ENCODE measurements at regions of chr22 and their contacts with region 1.

Region 1: DNA sequence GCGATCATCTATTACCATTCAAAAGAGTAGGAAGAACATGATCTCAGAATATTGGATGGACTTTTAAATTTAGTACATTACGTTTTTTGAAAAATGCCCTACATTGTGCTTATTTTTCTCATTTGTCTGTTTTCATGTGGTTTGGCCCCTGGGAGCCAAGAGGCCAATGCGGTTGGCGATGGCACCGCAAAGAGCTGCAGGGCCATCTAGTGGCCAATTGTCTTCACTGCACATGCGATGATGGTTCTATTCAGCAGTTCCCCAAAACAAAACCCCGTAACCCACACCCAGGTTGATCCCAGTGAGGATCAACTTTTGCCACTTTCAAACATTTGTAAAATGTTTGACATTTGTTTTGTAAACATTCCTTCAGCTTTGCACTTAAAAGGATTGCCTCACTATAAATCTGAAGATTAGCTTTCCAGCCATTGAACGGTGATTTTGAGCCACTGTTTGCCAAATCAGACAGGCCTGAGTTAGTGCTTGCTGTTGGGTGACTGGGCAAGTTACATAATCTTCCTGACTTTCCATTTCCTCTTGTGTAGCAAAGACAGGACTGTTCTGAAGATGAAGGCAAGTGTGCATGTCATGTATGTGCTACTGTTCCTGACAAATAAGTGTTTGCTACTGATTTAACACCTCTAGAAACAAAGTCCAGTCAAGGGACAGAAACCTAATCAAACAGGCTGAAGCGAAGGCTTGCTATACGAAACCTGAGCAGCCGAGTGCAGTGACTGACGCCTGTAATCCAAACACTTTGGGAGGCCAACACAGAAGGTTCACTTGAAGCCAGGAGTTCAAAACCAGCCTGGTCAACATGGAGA is 29.2 kb upstream of the XBP1 start:
- DNase-seq: peak; percentile 65
- H3K4me3 Mint-ChIP-seq: no peak overlapping the region
- H3K27ac Mint-ChIP-seq: no peak overlapping the region
- H3K4me1 Mint-ChIP-seq: peaks cover 32% of the 10 kb centered on the region
- H3K27me3 Mint-ChIP-seq: no peaks in the 10 kb centered on the region

Region 2: DNA sequence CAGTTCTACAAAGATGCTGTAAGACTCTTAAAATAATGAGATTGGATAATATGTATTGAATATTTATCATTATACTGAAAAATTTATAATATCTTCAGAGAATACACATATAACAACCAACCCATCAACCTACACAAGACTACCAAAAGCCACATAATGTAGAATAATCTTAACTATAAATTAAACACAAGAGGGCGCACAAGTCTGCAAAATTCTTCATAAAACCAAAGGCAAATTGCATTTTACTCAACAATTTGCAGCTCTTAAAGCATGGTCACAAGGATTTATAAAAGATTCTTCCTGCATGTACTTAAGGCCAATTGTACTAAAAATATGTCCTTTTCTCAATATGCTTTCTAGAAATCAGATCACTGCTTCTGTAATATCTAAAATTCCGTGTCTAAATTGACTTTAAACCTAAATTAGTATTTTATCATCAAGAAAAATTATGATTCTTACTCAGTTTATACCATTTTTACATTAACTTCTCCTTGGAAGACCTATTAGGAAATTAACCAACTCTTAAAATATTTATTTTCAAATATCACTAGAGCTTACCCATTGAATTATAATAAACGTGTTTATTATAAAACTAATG is 228.9 kb before region 1 on chr22:
- intact Hi-C with region 1: loop called (anchors 1 kb)
- DNase-seq: no peak
- H3K4me3 Mint-ChIP-seq: no peak overlapping the region
- H3K27ac Mint-ChIP-seq: no peak overlapping the region
- H3K4me1 Mint-ChIP-seq: no peaks in the 10 kb centered on the region
- H3K27me3 Mint-ChIP-seq: peaks cover 32% of the 10 kb centered on the region

Region 3: GRCh38 chr22:28647216-28647615 is 182.4 kb before region 1 on chr22:
- intact Hi-C with region 1: no loop called
- DNase-seq: no peak
- H3K4me3 Mint-ChIP-seq: no peak overlapping the region
- H3K27ac Mint-ChIP-seq: no peak overlapping the region
- H3K4me1 Mint-ChIP-seq: no peaks in the 10 kb centered on the region
- H3K27me3 Mint-ChIP-seq: peaks cover 53% of the 10 kb centered on the region

Region 4: DNA sequence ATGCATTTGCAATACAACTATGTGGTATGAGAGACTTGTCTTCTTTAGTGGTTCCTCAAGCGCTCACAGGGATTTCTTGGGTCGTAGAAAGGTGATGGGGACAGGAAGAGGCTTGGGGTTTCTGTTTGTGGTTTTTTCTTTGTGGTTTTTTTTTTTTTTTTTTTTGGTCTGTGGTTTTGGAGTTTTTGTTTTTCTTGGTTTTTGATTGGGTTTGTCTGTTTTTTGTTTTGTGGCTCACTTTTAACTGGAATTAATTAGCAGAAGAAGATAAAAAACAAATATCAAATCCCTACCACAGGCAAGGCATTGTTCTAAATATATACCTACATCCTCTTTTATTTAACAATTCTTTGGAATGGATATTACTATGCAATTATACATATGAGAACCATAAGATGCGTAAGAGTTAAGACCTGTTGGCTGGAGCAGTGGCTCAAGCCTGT is 155.4 kb before region 1 on chr22:
- intact Hi-C with region 1: loop called (anchors 10 kb)
- DNase-seq: peak; percentile 41
- H3K4me3 Mint-ChIP-seq: no peak overlapping the region
- H3K27ac Mint-ChIP-seq: peak overlapping the region; percentile 93
- H3K4me1 Mint-ChIP-seq: peaks cover 26% of the 10 kb centered on the region
- H3K27me3 Mint-ChIP-seq: peaks cover 62% of the 10 kb centered on the region

Region 5: GRCh38 chr22:28741758-28742561 is 87.6 kb before region 1 on chr22 and contains the starts of genes CHEK2 and HSCB:
- intact Hi-C with region 1: loop called (anchors 1 kb)
- DNase-seq: peak; percentile 97
- H3K4me3 Mint-ChIP-seq: peak within 1 kb of the TSS; percentile 87
- H3K27ac Mint-ChIP-seq: peak within 1 kb of the TSS; percentile 83
- H3K4me1 Mint-ChIP-seq: peaks cover 36% of the 10 kb centered on the region
- H3K27me3 Mint-ChIP-seq: no peaks in the 10 kb centered on the region
- total RNA-seq, gene CHEK2: 33.7 and 33.8 TPM in 2 replicates
- total RNA-seq, gene HSCB: 14.1 and 14.6 TPM in 2 replicates

Region 6: GRCh38 chr22:28772633-28773460 is 56.7 kb before region 1 on chr22 and contains the start of gene CCDC117:
- intact Hi-C with region 1: loop called (anchors 2 kb)
- DNase-seq: peak; percentile 89
- H3K4me3 Mint-ChIP-seq: peak within 1 kb of the TSS; percentile 99
- H3K27ac Mint-ChIP-seq: peak within 1 kb of the TSS; percentile 100
- H3K4me1 Mint-ChIP-seq: peaks cover 19% of the 10 kb centered on the region
- H3K27me3 Mint-ChIP-seq: no peaks in the 10 kb centered on the region
- total RNA-seq, gene CCDC117: 33.9 and 38.6 TPM in 2 replicates